Stomach (tissue), 19 donors: ENCODE measurements at regions of chr4 and their contacts with region 1.

Region 1: GRCh38 chr4:185395956-185396723 is 416 bp upstream of the LRP2BP start:
- DNase-seq: peak; percentile 98 to 99
- H3K4me3 ChIP-seq: peak overlapping the region; percentile 55 to 90 (median 78)
- H3K27ac ChIP-seq: peak overlapping the region; percentile 99
- H3K4me1 ChIP-seq: peaks cover 14 to 56% (median 32%) of the 10 kb centered on the region in 4 donors
- H3K27me3 ChIP-seq: no peaks in the 10 kb centered on the region
- CTCF ChIP-seq: no peak
- EP300 ChIP-seq: peak; percentile 65
- POLR2A ChIP-seq: peak in 2 of 4 donors; percentile 54 to 64

Region 2: GRCh38 chr4:185210102-185210981 is 185.8 kb before region 1 on chr4:
- intact Hi-C with region 1: loop called (anchors 10 kb)
- DNase-seq: peak; percentile 51 to 86
- H3K4me3 ChIP-seq: peak overlapping the region; percentile 65 to 83 (median 78)
- H3K27ac ChIP-seq: peak overlapping the region; percentile 77 to 96 (median 95)
- H3K4me1 ChIP-seq: peaks cover 14 to 44% (median 25%) of the 10 kb centered on the region in 4 donors
- H3K27me3 ChIP-seq: peaks cover 0 to 6% (median 0%) of the 10 kb centered on the region in 3 donors
- CTCF ChIP-seq: no peak
- EP300 ChIP-seq: no peak
- POLR2A ChIP-seq: no peak

Region 3: DNA sequence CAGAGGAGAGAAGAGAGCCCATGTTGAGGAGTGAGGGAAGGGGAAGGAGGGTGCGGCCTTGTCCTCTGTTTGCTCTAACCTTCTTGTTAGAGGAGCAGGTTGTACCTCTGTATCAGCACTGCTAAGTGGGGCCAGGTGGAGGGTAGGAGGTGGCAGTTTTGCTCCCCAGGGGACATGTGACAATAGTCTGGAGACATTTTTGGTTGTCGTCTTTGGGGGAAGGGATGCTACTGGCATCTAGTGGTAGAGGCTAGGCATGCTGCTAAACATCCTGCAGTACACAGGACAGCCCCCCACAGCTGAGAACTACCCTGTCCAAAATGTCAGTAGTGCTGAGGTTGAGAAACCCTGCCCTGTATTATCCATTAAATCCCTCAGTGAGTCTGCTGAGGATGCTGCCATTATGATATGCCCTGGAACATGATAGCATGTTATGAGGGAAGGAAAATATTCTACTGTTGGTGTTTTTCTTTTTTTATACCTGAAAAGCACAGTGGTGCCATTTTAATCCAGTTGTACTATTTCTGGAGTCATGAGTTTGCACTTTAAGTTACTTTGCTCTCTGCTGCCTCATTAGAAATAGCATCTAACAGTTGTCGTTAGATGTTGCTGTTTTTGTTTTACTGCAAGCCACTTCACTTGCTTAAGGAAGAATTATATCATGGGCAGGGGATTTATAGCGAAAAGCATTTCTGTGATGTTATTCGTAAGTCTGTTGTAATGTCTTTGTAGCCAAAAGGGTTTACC is 91.0 kb before region 1 on chr4:
- intact Hi-C with region 1: no loop called
- DNase-seq: peak in 1 of 2 donors; percentile 52
- H3K4me3 ChIP-seq: no peak overlapping the region
- H3K27ac ChIP-seq: no peak overlapping the region
- H3K4me1 ChIP-seq: peaks cover 0 to 8% (median 3%) of the 10 kb centered on the region in 4 donors
- H3K27me3 ChIP-seq: no peaks in the 10 kb centered on the region
- CTCF ChIP-seq: peak in 1 of 7 experiments; percentile 28
- EP300 ChIP-seq: no peak
- POLR2A ChIP-seq: no peak